Mucosa of descending colon (tissue), 3 donors: ENCODE measurements at regions of chr11 and their contacts with region 1.

Region 1: GRCh38 chr11:130434521-130435223 is 6.3 kb upstream of the ADAMTS8 start:
- DNase-seq: peak; percentile 64 to 84 (median 72)
- ATAC-seq: peak; percentile 96
- H3K4me3 ChIP-seq: no peak overlapping the region
- H3K4me1 ChIP-seq: peaks cover 2% of the 10 kb centered on the region
- CTCF ChIP-seq: peak; percentile 81

Region 2: GRCh38 chr11:130223291-130223971 is 211.2 kb before region 1 on chr11:
- intact Hi-C with region 1: loop called in 1 of 2 experiments (anchors 5 kb)
- DNase-seq: no peak
- ATAC-seq: no peak
- H3K4me3 ChIP-seq: no peak overlapping the region
- H3K4me1 ChIP-seq: no peaks in the 10 kb centered on the region
- CTCF ChIP-seq: no peak

Region 3: DNA sequence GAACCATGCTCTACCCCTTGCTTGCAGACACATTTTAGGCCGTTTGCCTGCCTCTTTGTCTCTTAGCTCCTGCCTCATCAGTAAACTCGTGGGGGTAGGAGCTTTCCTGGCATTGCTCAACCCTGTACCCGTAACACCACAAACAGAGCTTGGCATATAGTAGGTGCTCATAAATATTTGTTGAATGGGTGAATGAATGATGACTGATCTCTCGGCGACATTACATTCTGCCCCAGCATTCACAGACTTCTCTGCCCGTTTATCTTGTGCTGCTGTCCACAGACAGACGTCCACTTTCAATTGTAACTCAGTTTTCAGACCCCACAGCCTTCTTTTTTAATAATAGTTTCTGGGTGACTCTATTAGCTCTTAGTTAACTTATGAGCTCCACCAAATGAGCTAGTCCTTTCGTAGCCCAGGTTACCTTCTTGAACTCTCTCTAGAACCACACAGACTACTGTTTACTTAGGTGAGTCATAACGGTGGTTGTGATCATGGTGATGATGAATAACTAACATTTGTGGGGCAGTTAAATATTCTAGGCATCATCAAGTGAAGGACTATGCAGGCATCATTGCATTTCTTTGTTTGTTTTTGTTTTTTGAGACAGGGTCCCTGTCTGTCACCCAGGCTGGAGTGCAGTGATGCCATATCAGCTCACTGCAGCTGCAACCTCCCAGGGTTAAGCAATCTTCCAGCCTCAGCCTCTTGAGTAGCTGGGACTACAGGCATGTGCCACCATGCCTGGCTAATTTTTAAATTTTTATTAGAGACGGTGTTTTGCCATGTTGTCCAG is 202.2 kb after region 1 on chr11:
- intact Hi-C with region 1: loop called in 1 of 2 experiments (anchors 10 kb)
- DNase-seq: no peak
- ATAC-seq: peak; percentile 79
- H3K4me3 ChIP-seq: no peak overlapping the region
- H3K4me1 ChIP-seq: peaks cover 4% of the 10 kb centered on the region
- CTCF ChIP-seq: no peak

Region 4: DNA sequence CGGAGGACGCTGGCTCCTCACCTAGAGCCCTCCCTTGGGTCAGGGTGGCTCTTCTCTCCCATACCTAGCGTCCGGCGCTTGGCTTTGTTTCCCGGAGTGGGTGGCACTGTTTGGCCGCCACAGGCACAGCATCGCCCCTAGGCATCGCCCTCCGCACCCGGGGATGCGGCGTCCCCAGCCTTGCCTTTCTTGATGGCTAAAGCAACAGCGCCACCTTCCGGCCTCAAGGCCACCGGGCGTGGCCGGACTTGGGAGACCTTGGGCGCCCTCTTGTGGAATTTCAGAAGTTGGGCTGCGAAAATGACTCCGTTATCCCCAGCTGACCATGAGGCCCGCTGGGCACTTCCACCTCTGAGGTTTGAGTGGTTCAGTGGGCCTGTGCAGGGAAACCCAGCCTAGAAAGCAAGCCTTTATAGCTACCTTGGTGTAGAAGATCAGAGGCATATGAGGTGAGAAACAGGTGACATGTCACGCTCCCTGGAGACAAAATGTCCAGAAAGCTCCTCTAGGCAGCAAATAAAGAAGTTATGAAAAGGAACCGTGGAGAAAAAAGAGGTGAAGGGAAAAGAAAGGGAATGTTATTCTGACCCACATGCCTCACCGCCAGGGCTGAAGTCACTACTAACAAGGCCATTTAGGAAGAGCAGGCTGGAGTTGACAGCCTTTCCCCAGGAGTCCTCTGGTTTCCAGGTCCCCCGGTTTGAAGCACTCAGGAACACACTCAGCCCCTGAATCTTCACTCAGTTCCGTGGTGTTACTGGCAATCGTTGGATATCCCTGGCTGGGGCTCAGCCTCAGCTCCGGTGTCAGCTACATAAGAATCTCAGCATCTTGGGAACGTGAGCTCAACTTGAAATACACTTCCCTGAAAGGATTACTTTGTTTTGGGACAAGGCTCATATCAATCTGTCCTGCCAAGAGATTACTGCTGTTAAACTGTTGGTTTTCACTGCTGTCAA is 427.5 kb after region 1 on chr11:
- intact Hi-C with region 1: loop called (anchors 2 kb)
- DNase-seq: peak; percentile 91 to 98 (median 91)
- ATAC-seq: peak; percentile 97
- H3K4me3 ChIP-seq: no peak overlapping the region
- H3K4me1 ChIP-seq: no peaks in the 10 kb centered on the region
- CTCF ChIP-seq: peak; percentile 99

Region 5: GRCh38 chr11:130894322-130895025 is 459.8 kb after region 1 on chr11:
- intact Hi-C with region 1: loop called in 1 of 2 experiments (anchors 10 kb)
- DNase-seq: peak in 2 of 3 donors; percentile 72 to 84
- ATAC-seq: peak; percentile 92
- H3K4me3 ChIP-seq: no peak overlapping the region
- H3K4me1 ChIP-seq: no peaks in the 10 kb centered on the region
- CTCF ChIP-seq: peak; percentile 64